Activated CD8-positive, alpha-beta T cell treated with anti-CD3 and anti-CD28 coated beads, Interleukin-2, amount 10 ng/mL, durations not matched to agents 7 days and 5 days (primary cell): ENCODE measurements at regions of chr11 and their contacts with region 1.

Region 1: GRCh38 chr11:65314501-65315203 is at the start of gene CDC42EP2:
- DNase-seq: peak; percentile 79
- ATAC-seq: peak; percentile 93
- H3K4me3 Mint-ChIP-seq: peak within 1 kb of the TSS; percentile 71
- H3K27ac Mint-ChIP-seq: no peak within 1 kb of the TSS
- H3K4me1 Mint-ChIP-seq: peaks cover 8% of the 10 kb centered on the region
- H3K27me3 Mint-ChIP-seq: peaks cover 16% of the 10 kb centered on the region
- total RNA-seq, gene CDC42EP2: 0.29 to 1.2 TPM

Region 2: DNA sequence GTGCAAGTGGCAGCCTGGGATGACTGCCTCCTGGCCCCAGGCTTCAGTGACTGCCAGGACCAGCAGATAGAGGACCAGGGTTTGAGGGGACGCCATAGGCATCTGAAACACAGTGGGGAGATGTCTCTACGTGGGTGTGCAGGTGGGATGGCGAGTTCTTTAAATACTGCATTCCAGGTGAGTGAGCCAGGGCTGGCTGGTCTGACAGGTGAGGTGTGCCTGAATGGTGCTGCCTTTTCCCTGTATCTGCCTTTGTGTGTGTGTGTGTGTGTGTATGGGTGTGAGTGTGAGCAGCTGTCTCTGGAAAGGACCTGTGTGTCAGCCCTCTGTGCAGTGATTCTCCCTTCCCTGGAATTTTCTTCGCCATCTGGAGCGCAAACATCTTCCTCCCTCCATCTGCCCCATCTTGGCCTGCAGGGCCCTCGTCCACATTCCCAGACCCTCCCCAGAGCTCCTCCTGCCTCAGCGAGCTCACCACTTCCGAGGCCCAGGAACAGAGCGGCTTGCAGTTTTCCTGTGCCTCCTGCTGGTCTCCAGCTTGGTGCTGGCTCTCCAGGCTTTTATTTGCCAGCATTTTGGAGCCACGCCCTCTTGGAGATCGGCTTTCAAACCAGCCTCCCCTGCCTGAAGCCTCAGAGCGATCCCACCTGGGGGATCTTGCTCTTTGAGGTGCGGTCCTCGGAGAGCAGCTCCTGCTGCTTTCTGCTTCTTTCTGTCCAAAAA is 379.1 kb before region 1 on chr11 and contains the start of gene GPHA2:
- CTCF ChIA-PET with region 1: no interaction called
- POLR2A ChIA-PET with region 1: no interaction called
- DNase-seq: no peak
- ATAC-seq: no peak
- H3K4me3 Mint-ChIP-seq: no peak within 1 kb of the TSS
- H3K27ac Mint-ChIP-seq: no peak within 1 kb of the TSS
- H3K4me1 Mint-ChIP-seq: no peaks in the 10 kb centered on the region
- H3K27me3 Mint-ChIP-seq: no peaks in the 10 kb centered on the region
- total RNA-seq, gene GPHA2: not detected

Region 3: DNA sequence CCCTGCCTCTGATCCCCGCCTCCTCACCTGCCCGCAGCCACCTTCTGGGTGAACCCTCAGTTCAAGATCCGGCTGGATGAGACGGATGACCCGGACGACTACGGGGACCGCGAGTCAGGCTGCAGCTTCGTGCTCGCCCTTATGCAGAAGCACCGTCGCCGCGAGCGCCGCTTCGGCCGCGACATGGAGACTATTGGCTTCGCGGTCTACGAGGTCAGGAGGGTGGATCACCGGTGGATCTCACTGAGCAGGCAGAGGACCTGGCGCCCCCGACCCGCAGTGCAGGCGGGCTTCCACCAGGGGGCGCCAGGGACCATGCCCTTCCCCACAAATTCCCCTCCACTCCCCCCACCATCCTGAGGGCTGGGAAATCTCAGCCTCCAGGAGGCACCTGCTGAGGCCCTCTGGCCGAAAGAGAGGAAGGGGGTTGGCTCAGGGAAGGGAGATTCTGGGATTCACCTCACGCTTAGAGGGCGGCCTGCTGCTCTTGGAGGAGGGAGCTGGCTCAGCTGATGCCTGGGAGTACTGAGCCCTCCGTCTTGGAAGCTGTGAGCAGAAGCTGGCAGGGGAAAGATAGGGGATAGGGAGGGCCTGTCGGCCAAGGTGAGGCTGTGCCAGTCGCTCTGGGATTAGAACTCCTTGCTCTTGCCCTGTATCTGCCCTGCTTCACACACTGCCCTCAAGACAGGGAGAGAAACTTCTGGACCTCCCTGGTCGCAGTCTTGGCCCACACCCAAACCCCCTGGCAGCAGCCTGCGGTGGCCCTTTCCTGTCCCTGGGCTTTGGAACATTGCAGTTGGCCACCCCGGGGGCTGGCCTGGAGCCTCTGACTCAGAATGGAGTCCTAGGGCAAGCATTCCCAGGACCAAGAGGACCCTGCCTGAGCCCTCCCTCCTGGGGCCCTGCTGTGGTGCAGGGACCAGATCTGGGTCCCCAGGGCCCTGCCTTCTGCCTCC is 109.7 kb before region 1 on chr11:
- CTCF ChIA-PET with region 1: interaction called, 13 read pairs
- POLR2A ChIA-PET with region 1: no interaction called
- DNase-seq: peak; percentile 54
- ATAC-seq: peak; percentile 66
- H3K4me3 Mint-ChIP-seq: no peak overlapping the region
- H3K27ac Mint-ChIP-seq: no peak overlapping the region
- H3K4me1 Mint-ChIP-seq: peaks cover 13% of the 10 kb centered on the region
- H3K27me3 Mint-ChIP-seq: no peaks in the 10 kb centered on the region

Region 4: GRCh38 chr11:65274735-65275682 is 39.6 kb before region 1 on chr11:
- CTCF ChIA-PET with region 1: interaction called, 70 read pairs
- POLR2A ChIA-PET with region 1: no interaction called
- DNase-seq: peak; percentile 42
- ATAC-seq: no peak
- H3K4me3 Mint-ChIP-seq: no peak overlapping the region
- H3K27ac Mint-ChIP-seq: no peak overlapping the region
- H3K4me1 Mint-ChIP-seq: peaks cover 12% of the 10 kb centered on the region
- H3K27me3 Mint-ChIP-seq: no peaks in the 10 kb centered on the region

Region 5: GRCh38 chr11:65329944-65330403 is 15.3 kb after region 1 on chr11:
- CTCF ChIA-PET with region 1: interaction called, 215 read pairs
- POLR2A ChIA-PET with region 1: interaction called, 4 read pairs
- DNase-seq: peak; percentile 92
- ATAC-seq: no peak
- H3K4me3 Mint-ChIP-seq: no peak overlapping the region
- H3K27ac Mint-ChIP-seq: no peak overlapping the region
- H3K4me1 Mint-ChIP-seq: peaks cover 16% of the 10 kb centered on the region
- H3K27me3 Mint-ChIP-seq: peaks cover 4% of the 10 kb centered on the region

Region 6: GRCh38 chr11:65352783-65353182 is 38.1 kb after region 1 on chr11:
- CTCF ChIA-PET with region 1: interaction called, 18 read pairs
- POLR2A ChIA-PET with region 1: no interaction called
- DNase-seq: no peak
- ATAC-seq: no peak
- H3K4me3 Mint-ChIP-seq: no peak overlapping the region
- H3K27ac Mint-ChIP-seq: no peak overlapping the region
- H3K4me1 Mint-ChIP-seq: peaks cover 19% of the 10 kb centered on the region
- H3K27me3 Mint-ChIP-seq: no peaks in the 10 kb centered on the region

Region 7: DNA sequence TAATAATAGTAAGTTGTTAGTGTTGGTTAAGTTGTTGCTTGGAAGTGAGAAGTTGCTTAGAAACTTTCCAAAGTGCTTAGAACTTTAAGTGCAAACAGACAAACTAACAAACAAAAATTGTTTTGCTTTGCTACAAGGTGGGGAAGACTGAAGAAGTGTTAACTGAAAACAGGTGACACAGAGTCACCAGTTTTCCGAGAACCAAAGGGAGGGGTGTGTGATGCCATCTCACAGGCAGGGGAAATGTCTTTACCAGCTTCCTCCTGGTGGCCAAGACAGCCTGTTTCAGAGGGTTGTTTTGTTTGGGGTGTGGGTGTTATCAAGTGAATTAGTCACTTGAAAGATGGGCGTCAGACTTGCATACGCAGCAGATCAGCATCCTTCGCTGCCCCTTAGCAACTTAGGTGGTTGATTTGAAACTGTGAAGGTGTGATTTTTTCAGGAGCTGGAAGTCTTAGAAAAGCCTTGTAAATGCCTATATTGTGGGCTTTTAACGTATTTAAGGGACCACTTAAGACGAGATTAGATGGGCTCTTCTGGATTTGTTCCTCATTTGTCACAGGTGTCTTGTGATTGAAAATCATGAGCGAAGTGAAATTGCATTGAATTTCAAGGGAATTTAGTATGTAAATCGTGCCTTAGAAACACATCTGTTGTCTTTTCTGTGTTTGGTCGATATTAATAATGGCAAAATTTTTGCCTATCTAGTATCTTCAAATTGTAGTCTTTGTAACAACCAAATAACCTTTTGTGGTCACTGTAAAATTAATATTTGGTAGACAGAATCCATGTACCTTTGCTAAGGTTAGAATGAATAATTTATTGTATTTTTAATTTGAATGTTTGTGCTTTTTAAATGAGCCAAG is 110.7 kb after region 1 on chr11:
- CTCF ChIA-PET with region 1: no interaction called
- POLR2A ChIA-PET with region 1: no interaction called
- DNase-seq: peak; percentile 91
- ATAC-seq: peak; percentile 6
- H3K4me3 Mint-ChIP-seq: peak overlapping the region; percentile 87
- H3K27ac Mint-ChIP-seq: peak overlapping the region; percentile 100
- H3K4me1 Mint-ChIP-seq: peaks cover 53% of the 10 kb centered on the region
- H3K27me3 Mint-ChIP-seq: peaks cover 2% of the 10 kb centered on the region

Region 8: DNA sequence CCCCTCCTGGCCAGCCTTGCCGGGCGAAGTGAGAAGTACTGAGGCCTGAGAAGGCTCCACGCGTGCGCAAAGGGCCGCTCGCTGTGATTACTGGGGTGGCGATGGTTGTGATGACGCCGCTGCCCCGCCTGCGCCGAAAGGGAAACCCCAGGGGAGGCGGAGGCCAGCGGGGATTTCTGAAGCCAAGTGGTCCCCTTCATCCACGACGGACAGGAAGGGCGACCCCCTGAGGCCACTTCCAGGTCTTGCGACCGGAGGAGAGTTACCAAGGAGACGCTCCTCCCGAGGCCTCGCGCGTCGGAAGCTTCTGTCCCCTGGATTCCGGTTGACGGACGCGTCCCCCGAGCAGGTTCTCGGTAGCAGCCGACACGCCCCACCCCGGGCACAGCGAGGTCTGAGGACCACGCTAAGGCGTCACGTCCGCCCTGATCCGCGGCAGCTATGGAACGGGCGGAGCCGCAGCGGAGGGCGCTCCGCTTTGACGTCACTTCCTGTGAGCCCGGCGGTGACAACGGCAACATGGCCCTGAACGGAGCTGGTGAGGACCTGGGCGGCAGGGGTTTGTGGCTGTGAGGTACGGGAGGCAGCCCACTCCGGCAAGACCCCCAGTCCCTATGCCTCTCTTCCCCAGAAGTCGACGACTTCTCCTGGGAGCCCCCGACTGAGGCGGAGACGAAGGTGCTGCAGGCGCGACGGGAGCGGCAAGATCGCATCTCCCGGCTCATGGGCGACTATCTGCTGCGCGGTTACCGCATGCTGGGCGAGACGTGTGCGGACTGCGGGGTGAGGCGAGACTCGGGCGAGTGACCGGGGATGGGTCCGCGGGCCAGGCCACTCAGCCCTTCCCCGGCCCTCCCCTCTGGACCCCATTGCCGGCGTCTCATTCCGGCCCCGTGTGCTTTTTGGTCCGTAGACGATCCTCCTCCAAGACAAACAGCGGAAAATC is 255.6 kb after region 1 on chr11 and contains the start of gene ZNRD2:
- CTCF ChIA-PET with region 1: no interaction called
- POLR2A ChIA-PET with region 1: no interaction called
- DNase-seq: peak; percentile 99
- ATAC-seq: peak; percentile 70
- H3K4me3 Mint-ChIP-seq: peak within 1 kb of the TSS; percentile 100
- H3K27ac Mint-ChIP-seq: peak within 1 kb of the TSS; percentile 99
- H3K4me1 Mint-ChIP-seq: peaks cover 71% of the 10 kb centered on the region
- H3K27me3 Mint-ChIP-seq: no peaks in the 10 kb centered on the region
- total RNA-seq, gene ZNRD2: 39.2 to 40.7 TPM

Region 9: GRCh38 chr11:65791691-65792213 is 477.1 kb after region 1 on chr11:
- CTCF ChIA-PET with region 1: no interaction called
- POLR2A ChIA-PET with region 1: no interaction called
- DNase-seq: peak; percentile 76
- ATAC-seq: peak; percentile 80
- H3K4me3 Mint-ChIP-seq: no peak overlapping the region
- H3K27ac Mint-ChIP-seq: peak overlapping the region; percentile 75
- H3K4me1 Mint-ChIP-seq: peaks cover 39% of the 10 kb centered on the region
- H3K27me3 Mint-ChIP-seq: peaks cover 30% of the 10 kb centered on the region